Left cardiac atrium (tissue), 4 donors: ENCODE measurements at regions of chr2 and their contacts with region 1.

Region 1: GRCh38 chr2:216698895-216699294 is 3.5 kb upstream of the IGFBP5 start:
- DNase-seq: no peak
- ATAC-seq: peak; percentile 23 to 40

Region 2: DNA sequence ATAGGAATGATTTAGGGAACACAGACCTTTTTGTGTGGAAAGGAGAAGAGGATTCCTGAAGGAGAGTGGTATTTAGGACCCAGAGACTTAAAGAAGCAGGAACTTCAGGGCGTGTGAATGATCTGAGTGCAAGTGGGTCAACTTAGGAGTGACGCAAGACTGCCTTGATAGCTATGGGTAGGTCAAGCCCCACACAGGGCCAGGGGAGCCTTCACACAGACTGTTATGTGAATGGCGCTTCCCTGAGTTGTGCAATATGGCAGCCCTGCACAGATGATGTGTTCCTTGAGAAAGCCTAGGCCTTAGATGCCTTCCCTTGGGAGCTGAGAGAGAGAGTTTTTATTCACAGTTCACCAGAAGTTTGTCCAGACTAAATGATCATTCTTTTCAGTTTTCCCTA is 43.5 kb after region 1 on chr2:
- intact Hi-C with region 1: no loop called
- DNase-seq: peak; percentile 62
- ATAC-seq: peak; percentile 70 to 73

Region 3: GRCh38 chr2:216849987-216850386 is 151.1 kb after region 1 on chr2:
- intact Hi-C with region 1: no loop called
- DNase-seq: peak; percentile 73
- ATAC-seq: peak; percentile 82 to 88

Region 4: GRCh38 chr2:216989340-216990129 is 290.6 kb after region 1 on chr2:
- intact Hi-C with region 1: loop called (anchors 5 kb)
- DNase-seq: no peak
- ATAC-seq: peak; percentile 32 to 49

Region 5: DNA sequence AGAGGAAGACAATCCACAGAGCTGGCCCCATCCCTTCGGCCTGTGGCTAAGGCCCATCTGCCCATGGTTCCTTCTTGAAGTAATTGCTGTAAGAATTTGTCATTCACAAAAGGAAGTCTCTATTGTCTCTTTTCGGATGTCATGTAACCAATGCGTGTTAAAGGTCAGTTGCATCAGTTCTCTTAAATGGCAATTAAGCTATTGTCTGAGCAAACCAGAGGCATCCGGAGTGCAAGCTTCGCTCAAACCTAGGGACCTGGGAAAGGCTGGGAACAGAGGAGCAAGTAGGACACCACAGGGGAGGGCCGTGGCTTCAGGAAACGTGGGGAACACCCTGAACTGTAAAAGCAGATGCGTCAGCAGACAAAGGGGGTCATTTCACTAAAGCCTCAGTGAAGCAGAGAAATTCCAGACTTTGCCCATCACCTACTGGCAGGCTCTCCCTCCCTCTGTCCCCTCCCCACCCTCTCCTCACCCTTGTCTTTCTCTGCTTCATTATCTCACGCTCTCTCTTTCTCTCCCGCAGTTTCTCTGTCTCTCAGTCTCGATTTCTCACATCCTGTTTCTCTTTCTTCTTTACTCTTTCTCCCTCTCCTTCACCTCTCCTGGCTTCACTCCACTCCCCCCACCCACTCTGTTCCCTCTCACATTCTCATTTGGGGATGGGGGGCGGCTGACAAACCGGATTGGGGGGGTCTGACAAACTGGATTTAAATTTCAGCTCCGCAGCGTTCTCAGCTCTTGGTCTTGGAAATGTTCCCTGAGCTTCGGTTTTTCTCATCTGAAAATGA is 365.5 kb after region 1 on chr2:
- intact Hi-C with region 1: loop called in 1 of 2 experiments (anchors 5 kb)
- DNase-seq: peak; percentile 40
- ATAC-seq: peak; percentile 32 to 54

Region 6: DNA sequence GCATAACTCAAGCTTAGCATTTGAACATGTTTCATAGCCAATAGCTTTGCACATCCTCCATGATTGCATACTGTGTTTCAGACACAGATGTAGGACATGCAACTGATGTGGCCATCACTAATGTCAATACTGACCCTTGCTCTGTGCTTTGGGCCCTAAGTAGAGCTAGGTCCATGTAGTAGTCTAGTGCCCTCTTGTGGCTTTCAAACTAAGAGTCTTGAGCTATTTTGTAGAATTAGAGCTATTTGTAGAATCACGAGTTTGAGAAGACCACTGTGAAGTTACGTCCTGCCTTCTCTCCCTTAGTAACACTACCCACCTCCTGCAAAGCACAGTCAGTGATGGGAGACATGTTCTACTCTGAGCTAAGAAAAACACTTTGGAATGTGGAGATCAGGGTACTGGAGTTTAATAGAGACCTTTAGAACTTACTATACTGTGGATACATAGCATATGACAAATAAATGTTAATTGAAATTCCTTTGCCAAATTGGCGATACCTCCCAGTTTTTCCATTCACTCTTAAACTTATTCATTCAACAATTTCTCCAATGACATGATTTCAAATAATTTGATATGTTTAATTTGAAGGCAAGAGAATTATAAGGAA is 467.5 kb after region 1 on chr2:
- intact Hi-C with region 1: loop called (anchors 5 kb)
- DNase-seq: no peak
- ATAC-seq: peak; percentile 61 to 71

Region 7: DNA sequence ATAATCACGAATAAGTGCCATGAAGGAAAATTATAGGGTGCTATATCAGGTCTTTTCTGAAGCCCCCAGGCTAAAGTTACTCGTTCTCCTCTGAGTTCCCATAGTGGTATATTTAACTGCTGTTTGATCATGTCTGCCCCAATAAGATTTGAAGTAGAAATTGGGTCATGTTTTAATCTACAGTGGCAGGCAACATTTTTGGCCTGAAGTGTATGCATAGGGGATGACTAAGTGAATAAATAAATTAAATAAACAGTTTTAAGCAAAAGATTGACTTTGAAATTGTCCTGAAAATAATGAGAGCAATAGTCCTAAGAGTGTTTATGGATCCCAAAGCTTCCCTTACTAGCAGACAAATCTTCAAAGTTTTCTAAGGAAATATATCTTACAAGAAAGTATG is 803.0 kb after region 1 on chr2:
- intact Hi-C with region 1: loop called in 1 of 2 experiments (anchors 5 kb)
- DNase-seq: no peak
- ATAC-seq: no peak

Region 8: GRCh38 chr2:217510771-217511291 is 811.9 kb after region 1 on chr2:
- intact Hi-C with region 1: loop called (anchors 5 kb)
- DNase-seq: peak; percentile 66
- ATAC-seq: peak; percentile 86 to 96

Region 9: DNA sequence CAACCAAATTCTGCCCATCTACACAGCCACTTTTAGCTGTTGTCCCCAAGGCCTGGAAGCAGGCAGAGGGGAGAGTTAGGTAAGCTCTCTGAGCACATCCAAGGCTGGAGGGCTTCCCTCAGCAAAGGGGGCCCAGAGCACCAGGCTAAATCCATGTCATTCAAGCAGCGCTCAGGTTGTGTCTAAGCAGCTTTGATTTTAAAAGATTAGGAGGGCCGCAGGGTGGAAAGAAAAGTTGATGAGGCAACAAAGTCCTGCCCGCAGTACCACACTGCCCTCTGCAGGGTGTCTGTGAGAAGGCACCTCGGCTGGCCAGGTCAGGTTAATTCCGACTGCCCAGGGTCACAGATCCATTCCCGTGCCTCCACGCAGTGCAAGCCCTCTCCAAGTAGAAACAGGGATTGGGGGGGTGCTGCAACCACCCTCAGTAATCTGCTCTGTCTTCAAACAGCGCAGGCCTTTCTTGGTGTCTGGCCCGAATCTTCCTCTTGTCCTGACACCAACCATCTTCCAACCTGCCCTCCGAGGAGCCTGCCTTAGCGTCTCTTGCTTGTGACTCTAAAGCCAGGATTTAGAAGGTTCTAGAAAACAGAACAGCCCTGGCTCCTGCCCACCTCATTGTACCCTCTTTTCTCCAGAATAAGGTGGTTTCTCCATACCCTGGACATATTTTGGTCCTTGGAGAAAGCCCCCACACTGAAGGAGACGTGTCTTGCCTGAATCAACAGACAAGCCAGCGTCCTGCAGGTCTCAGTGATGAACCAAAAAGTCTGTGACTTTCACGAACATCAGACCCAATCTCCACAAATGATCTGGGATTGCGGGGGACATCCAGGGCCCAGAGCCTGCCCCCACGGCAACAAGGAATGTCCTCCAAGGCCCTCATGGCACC is 1014.7 kb after region 1 on chr2:
- intact Hi-C with region 1: loop called (anchors 2 to 10 kb)
- DNase-seq: peak; percentile 76
- ATAC-seq: peak; percentile 82 to 84